AG04449 (cell line): ENCODE measurements at regions of chrX and their contacts with region 1.

Region 1: GRCh38 chrX:136255541-136255940 is 4.3 kb upstream of the MAP7D3 start:
- DNase-seq: no peak
- H3K4me3 ChIP-seq: peak overlapping the region; percentile 1; the same call in 1 of the 2 replicates
- CTCF ChIP-seq: no peak

Region 2: DNA sequence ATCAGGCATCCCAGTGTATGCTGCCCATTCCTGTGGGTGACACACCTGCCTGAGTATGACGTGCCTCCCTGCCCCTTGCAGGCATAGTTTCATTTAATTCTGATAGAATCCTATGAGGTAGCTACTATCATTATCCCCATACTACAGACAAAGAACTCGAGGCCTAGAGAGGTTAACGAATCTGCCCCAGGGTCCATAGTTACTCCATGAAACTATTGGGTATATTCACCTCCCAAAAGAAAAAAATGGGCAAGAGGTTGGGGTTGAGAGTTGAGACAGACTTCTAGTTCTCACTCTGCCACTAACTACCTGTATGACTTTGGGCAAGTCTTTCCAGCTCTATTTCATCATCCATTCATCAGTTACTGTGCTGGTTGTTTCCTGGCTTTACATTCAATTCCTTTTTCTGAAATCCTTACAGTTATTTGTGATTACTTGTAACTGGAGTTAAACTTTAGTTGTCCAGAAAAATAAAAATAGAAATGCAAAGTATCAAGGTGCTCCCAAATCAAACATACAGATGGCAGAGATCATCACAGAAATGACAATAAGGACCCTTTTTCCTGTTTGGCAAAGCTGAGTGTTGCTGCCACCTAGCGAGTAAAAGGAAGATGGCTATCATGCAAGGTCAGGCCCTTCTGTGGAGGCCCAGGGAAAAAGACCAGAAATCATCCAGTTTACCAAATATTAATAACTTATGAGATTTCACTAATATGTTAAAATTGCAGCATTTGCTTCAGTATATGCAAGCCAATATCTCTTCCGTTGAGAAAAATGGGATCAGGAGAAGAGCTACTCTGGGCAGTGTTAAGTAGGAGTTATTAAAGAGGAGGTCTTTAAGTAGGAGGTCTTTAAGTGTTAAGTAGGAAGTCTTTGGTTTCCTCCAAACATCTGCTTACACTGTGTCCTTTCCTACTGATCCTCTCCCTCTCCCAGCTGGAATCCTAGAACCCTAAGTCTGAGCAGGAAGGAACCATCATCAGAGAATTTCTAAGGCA is 12.8 kb after region 1 on chrX:
- CTCF ChIA-PET with region 1: interaction called, 23 read pairs
- POLR2A ChIA-PET with region 1: interaction called, 3 read pairs
- DNase-seq: no peak
- H3K4me3 ChIP-seq: no peak overlapping the region
- CTCF ChIP-seq: peak; percentile 57